ENCODE measurements at regions of chr3 and their contacts with region 1.

Region 1: DNA sequence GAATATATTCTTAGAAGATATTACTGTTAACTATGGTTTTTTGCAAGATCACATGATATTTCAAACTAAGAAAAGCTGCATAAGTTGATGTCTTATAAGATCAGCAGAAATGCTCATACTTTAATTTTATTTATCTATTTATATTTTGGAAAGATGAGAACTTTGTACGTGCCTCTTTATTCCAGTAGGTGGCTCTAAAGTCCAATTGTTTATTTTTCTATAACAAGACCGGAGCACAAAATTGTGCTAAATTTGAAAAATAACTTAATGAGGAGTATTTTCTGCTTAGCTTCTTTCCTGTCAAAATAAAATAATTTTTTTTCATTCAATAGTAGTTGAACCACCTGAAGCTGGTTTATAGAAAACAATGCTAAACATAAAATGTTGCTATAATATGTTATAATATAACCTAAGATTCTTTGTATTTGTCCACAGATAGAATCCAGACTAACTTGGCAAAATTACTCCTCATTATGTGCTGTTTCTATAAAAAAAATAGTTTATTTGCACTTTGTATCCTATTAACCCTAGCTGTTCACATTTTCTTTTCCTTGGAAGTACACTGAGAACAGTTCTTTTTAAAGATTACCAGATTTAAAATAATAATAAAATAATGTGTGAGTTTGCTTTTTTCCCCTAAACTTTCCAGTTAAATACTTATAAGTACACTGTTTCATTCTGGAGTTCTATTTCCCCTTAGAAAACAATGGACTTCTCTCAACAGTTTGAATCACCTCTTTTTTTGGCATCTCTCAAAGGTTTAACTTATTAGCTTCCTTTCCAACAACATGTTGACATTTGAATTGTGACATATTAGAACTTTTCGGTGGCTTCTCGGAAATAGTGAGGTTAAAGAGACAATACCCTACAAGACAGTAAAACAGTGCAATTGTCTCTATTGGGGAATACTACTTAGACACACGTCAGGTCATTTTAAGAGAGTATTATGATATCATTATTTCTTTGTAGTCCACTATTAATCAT is 530.0 kb downstream of the MECOM start:
- DNase-seq: no peak
- H3K4me3 ChIP-seq: no peak overlapping the region
- H3K27ac ChIP-seq: no peak overlapping the region
- H3K4me1 ChIP-seq: no peaks in the 10 kb centered on the region
- H3K27me3 ChIP-seq: peaks cover 8% of the 10 kb centered on the region; the same call in 1 of the 2 replicates
- CTCF ChIP-seq: peak; percentile 62
- EP300 ChIP-seq: no peak
- RAD21 ChIP-seq: peak; percentile 71

Region 2: DNA sequence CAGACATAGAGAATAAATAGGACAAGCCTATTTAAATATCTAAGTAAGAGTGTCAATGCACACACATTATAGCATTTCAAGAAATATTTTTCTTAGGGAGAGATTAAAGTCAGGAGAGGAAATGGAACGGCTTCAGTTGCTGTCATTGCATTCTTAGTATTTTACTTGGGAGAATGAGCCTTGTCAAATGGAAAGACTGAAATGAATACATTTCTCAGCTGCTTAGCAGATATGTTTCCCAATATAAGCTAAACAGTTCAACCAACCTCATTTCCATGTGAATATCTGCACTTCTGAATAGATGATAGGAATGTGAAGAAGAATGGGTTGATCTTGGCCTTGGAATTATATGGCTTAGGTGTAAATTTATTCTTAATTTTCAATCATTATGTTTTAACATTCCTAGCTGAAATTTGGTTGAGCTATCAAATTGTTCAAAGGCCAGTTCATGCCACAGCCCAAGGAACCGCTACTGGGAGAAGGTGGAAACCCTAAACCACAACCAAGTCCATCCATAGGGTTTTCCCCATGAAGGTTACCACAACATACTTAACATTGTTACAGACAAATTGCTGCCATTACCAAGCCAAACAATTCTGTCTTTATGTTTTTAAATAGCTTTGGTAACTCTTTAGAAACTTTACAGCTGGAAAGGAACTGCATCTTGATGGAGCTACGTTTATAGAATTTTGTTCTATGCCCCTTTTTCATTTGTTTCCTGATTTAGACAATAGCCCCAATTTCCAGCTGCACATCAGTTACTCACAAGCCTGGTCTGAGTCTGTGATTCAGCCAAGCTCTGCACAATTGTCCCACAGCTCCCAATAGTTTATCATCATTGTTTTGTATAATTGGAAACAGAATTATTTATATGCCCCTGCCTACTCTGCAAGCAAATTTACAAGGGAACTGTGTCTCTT is 70.4 kb after region 1 on chr3:
- CTCF ChIA-PET with region 1: no interaction called
- POLR2A ChIA-PET with region 1: no interaction called
- DNase-seq: no peak
- H3K4me3 ChIP-seq: no peak overlapping the region
- H3K27ac ChIP-seq: no peak overlapping the region
- H3K4me1 ChIP-seq: no peaks in the 10 kb centered on the region
- H3K27me3 ChIP-seq: no peaks in the 10 kb centered on the region
- CTCF ChIP-seq: no peak
- EP300 ChIP-seq: no peak
- RAD21 ChIP-seq: no peak

Region 3: GRCh38 chr3:169662132-169662842 is 528.8 kb after region 1 on chr3:
- CTCF ChIA-PET with region 1: interaction called, 121 read pairs
- POLR2A ChIA-PET with region 1: no interaction called
- DNase-seq: peak; percentile 91
- H3K4me3 ChIP-seq: peak overlapping the region; percentile 47 to 63
- H3K27ac ChIP-seq: no peak overlapping the region
- H3K4me1 ChIP-seq: peaks cover 9 to 15% of the 10 kb centered on the region in 2 experiments; a peak in 1 of 4 replicates
- H3K27me3 ChIP-seq: peaks cover 90% of the 10 kb centered on the region
- CTCF ChIP-seq: peak; percentile 47
- EP300 ChIP-seq: no peak
- RAD21 ChIP-seq: peak; percentile 61

Region 4: DNA sequence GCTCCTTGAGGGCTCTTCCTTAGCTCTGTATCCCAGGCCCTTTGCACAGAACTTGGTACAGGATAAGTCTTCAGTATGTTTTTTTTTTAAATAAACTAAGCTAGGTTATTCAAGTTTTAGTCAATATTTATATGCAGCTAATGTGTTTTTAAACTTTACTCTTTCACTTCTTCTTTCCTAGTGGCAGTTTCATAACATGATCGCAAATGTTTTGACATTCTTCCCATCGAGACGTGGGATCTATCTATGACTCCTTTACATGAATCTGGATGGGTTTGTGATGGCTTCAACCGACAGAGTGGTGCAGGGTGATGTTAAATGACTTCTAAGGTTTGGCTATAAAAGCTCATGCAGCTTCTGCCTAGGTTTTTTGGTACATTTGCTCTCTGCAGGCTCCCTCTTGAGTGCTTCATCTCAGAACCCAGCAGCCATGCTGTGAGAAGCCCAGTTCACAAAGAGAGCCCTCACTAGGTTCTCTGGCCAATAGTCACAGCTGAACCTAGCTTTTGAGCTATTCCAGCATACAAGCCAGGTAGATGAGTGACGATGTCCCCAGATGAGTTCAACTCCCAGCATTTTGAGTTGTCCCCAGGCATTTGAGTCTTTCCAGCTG is 543.6 kb after region 1 on chr3:
- CTCF ChIA-PET with region 1: interaction called, 10 read pairs
- POLR2A ChIA-PET with region 1: no interaction called
- DNase-seq: no peak
- H3K4me3 ChIP-seq: no peak overlapping the region
- H3K27ac ChIP-seq: no peak overlapping the region
- H3K4me1 ChIP-seq: no peaks in the 10 kb centered on the region
- H3K27me3 ChIP-seq: no peaks in the 10 kb centered on the region
- CTCF ChIP-seq: no peak
- EP300 ChIP-seq: no peak
- RAD21 ChIP-seq: no peak

Measured in SK-N-SH (cell line).